ENCODE measurements at regions of chr1 and their contacts with region 1.

Region 1: GRCh38 chr1:150281837-150282653 is at the start of gene CIART:
- DNase-seq: peak; percentile 93
- ATAC-seq: peak; percentile 98
- total RNA-seq, gene CIART: 5.7 TPM

Region 2: GRCh38 chr1:150259758-150260669 is 22.0 kb before region 1 on chr1:
- intact Hi-C with region 1: loop called (anchors 2 kb)
- DNase-seq: peak; percentile 58
- ATAC-seq: peak; percentile 36